Heart right ventricle (tissue), 16 donors: ENCODE measurements at regions of chr9 and their contacts with region 1.

Region 1: GRCh38 chr9:97921959-97922724 is at the start of gene TRMO:
- DNase-seq: peak; percentile 97 to 99
- ATAC-seq: peak; percentile 95 to 98 (median 97)
- H3K4me3 ChIP-seq: peak within 1 kb of the TSS; percentile 44 to 79 (median 64)
- H3K27ac ChIP-seq: peak within 1 kb of the TSS; percentile 90 to 100 (median 96)
- H3K4me1 ChIP-seq: peaks cover 6 to 43% (median 17%) of the 10 kb centered on the region in 9 donors
- H3K27me3 ChIP-seq: peaks cover 0 to 14% (median 0%) of the 10 kb centered on the region in 7 donors
- CTCF ChIP-seq: peak; percentile 38 to 94 (median 75)
- total RNA-seq, gene TRMO: 7.4 to 12.8 (median 8.2) TPM

Region 2: DNA sequence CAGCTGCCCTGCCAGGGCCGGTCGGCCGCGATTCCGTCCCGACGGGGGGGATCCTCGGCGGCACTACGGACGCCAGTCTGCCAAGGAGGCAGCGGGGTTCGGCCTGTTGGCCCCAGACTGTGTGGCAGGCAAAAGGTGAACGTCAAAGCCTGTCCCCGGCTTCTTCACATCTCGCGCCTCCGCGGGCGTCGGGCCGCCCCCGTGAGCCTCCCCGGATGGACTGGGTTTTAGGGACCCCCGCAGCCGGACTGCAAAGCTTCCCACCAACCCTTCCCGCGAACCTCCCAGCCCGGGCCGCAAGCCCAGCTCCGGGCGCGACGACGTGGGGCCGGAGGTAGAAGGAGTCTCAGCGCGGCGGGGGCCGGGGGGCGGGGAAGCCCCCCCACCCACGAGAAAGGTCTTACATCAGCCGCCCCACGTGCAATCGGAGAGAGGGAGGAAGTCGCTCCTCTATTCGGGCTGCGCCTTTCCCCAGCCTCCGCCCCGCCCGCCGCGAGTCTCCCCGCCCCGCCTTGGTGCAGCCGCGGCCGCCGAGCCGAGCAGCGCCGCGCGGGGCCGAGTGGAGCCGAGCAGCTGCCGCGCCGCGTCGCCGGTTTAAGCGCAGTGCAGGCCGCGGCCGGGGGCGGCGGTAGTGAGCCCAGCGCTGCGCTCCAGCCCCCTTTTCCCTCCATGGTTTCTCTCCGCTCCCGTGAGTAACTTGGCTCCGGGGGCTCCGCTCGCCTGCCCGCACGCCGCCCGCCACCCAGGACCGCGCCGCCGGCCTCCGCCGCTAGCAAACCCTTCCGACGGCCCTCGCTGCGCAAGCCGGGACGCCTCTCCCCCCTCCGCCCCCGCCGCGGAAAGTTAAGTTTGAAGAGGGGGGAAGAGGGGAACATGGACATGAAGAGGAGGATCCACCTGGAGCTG is 60.8 kb after region 1 on chr9 and contains the start of gene ANP32B:
- intact Hi-C with region 1: loop called in 6 of 10 experiments (anchors 1 to 2 kb)
- DNase-seq: peak; percentile 90 to 92
- ATAC-seq: peak; percentile 88 to 95 (median 93)
- H3K4me3 ChIP-seq: peak within 1 kb of the TSS; percentile 75 to 100 (median 96)
- H3K27ac ChIP-seq: peak within 1 kb of the TSS; percentile 95 to 100 (median 98)
- H3K4me1 ChIP-seq: peaks cover 0 to 62% (median 44%) of the 10 kb centered on the region in 9 donors
- H3K27me3 ChIP-seq: no peaks in the 10 kb centered on the region
- CTCF ChIP-seq: peak; percentile 73 to 99 (median 91)
- total RNA-seq, gene ANP32B: 48.2 to 68.2 (median 56.9) TPM

Region 3: DNA sequence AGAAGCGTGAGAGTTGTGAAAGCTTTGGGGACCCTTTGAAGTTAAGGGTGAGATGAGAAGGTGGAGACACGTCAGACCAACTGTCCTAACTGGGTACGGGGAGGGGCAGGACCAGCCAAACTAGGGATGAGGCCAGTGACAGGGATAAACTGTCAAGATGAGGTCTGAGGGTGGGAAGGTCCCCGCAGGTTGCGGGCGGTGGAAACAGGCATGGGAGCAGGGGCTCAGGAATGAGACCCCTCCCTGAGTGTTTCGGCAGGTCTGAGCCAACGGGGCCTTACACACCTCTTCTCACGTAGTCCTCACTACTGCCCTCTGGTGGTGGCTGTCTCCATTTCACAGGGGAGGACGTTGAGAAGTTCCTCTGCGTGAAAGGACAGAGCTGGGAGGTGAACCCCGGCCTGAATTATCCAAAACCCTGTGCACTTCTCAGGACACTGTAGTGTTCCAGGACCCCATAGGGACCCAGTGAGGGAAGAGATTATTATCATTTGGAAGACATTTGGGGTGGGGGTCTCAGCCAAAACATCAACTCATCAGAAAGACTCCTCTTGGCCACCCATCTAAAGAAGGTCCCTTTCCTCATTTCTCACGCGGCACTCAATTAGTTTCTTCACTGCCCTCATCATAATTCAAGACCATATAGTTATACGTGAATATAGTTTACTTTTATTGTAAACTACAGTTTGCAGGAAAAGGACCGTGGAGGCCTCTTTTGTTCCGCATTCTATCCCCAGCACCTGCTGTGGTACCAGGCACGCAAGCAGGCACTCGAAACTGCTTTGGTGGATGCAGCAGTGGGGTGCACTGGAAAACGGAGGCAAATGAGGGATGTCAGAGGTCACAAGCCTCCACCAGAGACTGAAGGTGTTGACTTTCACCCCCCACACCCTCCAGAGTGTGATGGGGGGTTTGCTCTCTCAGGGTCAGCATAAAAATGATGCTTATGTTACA is 112.7 kb after region 1 on chr9:
- intact Hi-C with region 1: loop called in 9 of 10 experiments (anchors 1 to 10 kb)
- DNase-seq: peak; percentile 75 to 88
- ATAC-seq: peak; percentile 80 to 92 (median 86)
- H3K4me3 ChIP-seq: peak overlapping the region in 3 of 10 donors; percentile 7 to 22 (median 22)
- H3K27ac ChIP-seq: no peak overlapping the region
- H3K4me1 ChIP-seq: peaks cover 0 to 22% (median 15%) of the 10 kb centered on the region in 9 donors
- H3K27me3 ChIP-seq: no peaks in the 10 kb centered on the region
- CTCF ChIP-seq: peak; percentile 69 to 92 (median 89)

Region 4: GRCh38 chr9:98056269-98057137 is 134.4 kb after region 1 on chr9 and contains the start of gene NANS:
- intact Hi-C with region 1: loop called in 2 of 10 experiments (anchors 1 to 2 kb)
- DNase-seq: peak; percentile 92 to 93
- ATAC-seq: peak; percentile 98 to 100 (median 99)
- H3K4me3 ChIP-seq: peak within 1 kb of the TSS; percentile 50 to 96 (median 84)
- H3K27ac ChIP-seq: peak within 1 kb of the TSS; percentile 63 to 97 (median 92)
- H3K4me1 ChIP-seq: peaks cover 0 to 36% (median 14%) of the 10 kb centered on the region in 9 donors
- H3K27me3 ChIP-seq: no peaks in the 10 kb centered on the region
- CTCF ChIP-seq: peak in 2 of 9 donors; percentile 19
- total RNA-seq, gene NANS: 20.0 to 43.7 (median 30.0) TPM

Region 5: DNA sequence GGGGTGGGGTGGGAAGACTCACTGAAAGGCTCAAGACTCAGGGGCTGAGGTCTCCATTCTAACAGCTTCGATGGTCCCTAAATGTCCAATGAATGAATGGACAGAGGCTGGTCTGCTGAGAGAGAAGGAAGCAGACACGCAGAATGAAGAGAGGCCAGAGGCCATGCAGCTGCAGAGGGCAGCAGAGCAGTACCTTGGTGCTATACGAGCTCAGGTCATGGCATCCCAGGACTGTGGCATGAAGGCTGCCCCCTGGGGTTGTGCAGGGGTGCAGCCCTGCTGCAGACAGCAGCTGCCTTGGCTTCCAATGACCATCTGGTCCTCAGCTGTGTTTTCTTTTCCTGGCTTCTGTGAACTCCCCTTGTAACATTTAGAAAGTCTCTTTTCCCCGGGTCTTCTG is 285.5 kb after region 1 on chr9:
- intact Hi-C with region 1: loop called in 1 of 10 experiments (anchors 10 kb)
- DNase-seq: no peak
- ATAC-seq: no peak
- H3K4me3 ChIP-seq: no peak overlapping the region
- H3K27ac ChIP-seq: no peak overlapping the region
- H3K4me1 ChIP-seq: peaks cover 0 to 7% (median 0%) of the 10 kb centered on the region in 9 donors
- H3K27me3 ChIP-seq: no peaks in the 10 kb centered on the region
- CTCF ChIP-seq: no peak